Dendritic cell treated with granulocyte-macrophage colony-stimulating factor and Interleukin-4, amounts not matched to agents 40 ng/mL and 50 ng/mL, for 4 days (primary cell): ENCODE measurements at regions of chrX and their contacts with region 1.

Region 1: GRCh38 chrX:38260231-38260630 is 39.6 kb upstream of the SRPX start:
- H3K4me3 Mint-ChIP-seq: no peak overlapping the region
- H3K27ac Mint-ChIP-seq: no peak overlapping the region
- H3K4me1 Mint-ChIP-seq: no peaks in the 10 kb centered on the region
- H3K27me3 Mint-ChIP-seq: no peaks in the 10 kb centered on the region

Region 2: DNA sequence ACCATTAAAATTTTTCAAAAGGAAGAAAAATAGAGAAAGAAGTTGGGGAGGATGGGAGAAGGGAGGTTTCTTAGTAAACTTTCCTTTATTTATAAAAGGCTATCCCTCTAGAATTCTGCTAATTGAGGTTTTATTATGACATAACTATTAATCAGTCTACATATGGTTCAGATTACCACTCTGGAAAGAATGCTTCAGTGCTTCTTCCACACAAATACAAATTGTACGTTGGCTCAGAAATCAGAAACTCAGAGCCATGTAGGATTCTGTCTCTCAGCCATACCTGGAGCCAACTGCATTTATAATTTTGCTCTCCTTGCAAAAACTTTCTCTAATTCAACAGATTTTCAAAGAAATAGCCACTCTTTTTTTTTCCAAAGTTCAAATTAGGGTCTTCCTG is 76.6 kb before region 1 on chrX:
- intact Hi-C with region 1: no loop called
- H3K4me3 Mint-ChIP-seq: no peak overlapping the region
- H3K27ac Mint-ChIP-seq: no peak overlapping the region
- H3K4me1 Mint-ChIP-seq: no peaks in the 10 kb centered on the region
- H3K27me3 Mint-ChIP-seq: no peaks in the 10 kb centered on the region

Region 3: GRCh38 chrX:38327007-38327774 is 67.0 kb after region 1 on chrX and contains the start of gene RPGR:
- intact Hi-C with region 1: loop called (anchors 10 kb)
- H3K4me3 Mint-ChIP-seq: peak within 1 kb of the TSS; percentile 93
- H3K27ac Mint-ChIP-seq: peak within 1 kb of the TSS; percentile 91
- H3K4me1 Mint-ChIP-seq: peaks cover 16% of the 10 kb centered on the region
- H3K27me3 Mint-ChIP-seq: no peaks in the 10 kb centered on the region